ENCODE measurements at regions of chr1 and their contacts with region 1.

Region 1: DNA sequence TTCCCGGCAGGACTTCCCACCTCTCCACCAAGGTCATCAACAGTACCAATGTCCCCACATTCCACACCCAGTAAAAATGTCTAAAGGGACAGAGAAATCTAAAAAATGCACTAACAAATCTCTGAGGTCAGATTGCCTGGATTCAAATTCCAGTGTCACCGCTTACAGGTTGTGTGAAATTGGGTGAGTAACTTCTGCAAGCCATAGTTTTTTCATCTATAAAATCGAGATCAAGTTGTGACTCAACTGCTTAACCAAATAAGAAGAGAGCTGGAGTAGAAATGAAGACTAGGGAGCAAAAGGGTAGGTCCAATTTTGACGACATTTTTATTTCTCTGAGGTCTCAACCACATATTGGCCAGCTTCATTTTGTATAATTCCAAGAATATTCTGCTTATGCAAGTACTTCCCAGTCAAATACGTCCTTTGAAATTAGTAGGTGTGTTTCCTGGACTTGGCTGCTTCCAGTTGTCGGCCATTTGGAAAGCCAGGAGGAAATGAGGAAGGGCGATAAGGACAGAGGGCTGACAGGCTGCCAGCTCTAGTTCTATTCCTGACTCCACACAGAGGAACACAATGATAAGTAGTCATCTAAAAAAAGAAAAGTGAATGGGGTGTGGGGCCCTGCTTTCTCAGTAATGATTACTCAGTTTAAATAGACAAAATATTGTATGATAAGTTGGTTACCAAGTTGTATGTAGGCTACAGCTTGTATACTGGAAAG is 57.7 kb upstream of the ZC3H11B start:
- ATAC-seq: no peak
- H3K4me3 ChIP-seq: no peak overlapping the region
- H3K27ac ChIP-seq: no peak overlapping the region
- H3K4me1 ChIP-seq: no peaks in the 10 kb centered on the region

Region 2: DNA sequence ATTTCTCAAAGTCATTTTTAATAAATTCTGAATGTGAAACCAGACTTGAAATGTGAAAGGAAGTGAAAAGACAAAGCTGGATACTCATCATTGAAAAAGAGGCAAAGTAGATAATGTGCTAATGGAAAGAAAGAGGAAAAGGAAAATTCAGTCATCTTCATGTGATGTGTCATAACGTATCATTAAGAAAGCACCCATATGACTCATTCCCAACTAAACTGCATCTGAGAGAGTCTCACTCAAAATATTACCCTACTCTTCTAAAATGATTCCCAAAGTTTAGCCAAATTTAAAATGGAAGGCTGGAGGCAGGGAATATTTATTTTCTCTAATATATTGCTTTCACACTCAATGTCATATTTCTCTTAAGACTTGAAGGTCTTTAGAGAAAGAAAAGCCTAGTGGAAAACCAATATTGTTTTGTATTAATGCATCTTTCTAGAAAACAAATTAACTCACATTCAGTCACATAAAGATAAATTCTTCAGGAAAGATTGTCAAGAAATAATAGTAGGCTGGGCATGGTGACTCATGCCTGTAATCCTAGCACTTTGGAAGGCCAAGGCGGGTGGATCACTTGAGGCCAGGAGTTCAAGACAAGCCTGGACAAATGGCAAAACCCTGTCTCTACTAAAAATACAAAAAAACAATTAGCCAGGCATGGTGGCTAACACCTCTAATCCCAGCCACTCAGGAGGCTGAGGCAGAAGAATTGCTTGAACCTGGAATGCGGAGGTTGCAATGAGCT is 127.9 kb after region 1 on chr1:
- in situ Hi-C with region 1: loop called in 1 of 9 experiments (anchors 10 kb)
- ATAC-seq: peak in 5 of 8 experiments; percentile 20 to 93 (median 41)
- H3K4me3 ChIP-seq: no peak overlapping the region
- H3K27ac ChIP-seq: no peak overlapping the region
- H3K4me1 ChIP-seq: peaks cover 21 to 22% of the 10 kb centered on the region in 2 donors

Measured in motor neuron (in vitro differentiated cells).